Upper lobe of right lung (tissue), 1 donor: ENCODE measurements at regions of chr6 and their contacts with region 1.

Region 1: DNA sequence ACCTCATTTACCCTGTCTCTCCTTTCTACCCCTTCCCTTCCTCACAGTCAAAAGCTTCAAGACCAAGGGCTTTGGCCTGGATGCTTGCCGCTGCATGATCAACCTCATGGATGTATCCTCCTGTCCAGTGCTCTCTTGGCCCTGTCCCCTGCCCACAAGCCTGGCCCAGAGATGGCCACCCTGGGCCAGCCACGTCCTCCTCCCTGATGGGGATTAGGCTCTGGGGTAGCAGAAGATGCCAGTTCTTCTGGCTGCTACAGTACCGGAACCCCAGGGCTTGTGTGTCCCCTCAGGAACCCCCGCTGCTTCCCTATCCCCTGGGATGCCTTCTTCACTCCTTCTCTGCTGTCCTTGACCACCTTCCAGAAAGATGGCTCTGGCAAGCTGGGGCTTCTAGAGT is 22.3 kb downstream of the CAPN11 start:
- DNase-seq: no peak
- ATAC-seq: no peak
- H3K4me3 ChIP-seq: no peak overlapping the region
- H3K27ac ChIP-seq: no peak overlapping the region
- H3K4me1 ChIP-seq: peaks cover 4% of the 10 kb centered on the region
- H3K27me3 ChIP-seq: no peaks in the 10 kb centered on the region
- CTCF ChIP-seq: no peak

Region 2: GRCh38 chr6:44237813-44238433 is 57.0 kb after region 1 on chr6:
- intact Hi-C with region 1: loop called (anchors 5 kb)
- DNase-seq: peak; percentile 92
- ATAC-seq: peak; percentile 92
- H3K4me3 ChIP-seq: peak overlapping the region; percentile 63
- H3K27ac ChIP-seq: peak overlapping the region; percentile 90
- H3K4me1 ChIP-seq: peaks cover 30% of the 10 kb centered on the region
- H3K27me3 ChIP-seq: no peaks in the 10 kb centered on the region
- CTCF ChIP-seq: peak; percentile 97

Region 3: DNA sequence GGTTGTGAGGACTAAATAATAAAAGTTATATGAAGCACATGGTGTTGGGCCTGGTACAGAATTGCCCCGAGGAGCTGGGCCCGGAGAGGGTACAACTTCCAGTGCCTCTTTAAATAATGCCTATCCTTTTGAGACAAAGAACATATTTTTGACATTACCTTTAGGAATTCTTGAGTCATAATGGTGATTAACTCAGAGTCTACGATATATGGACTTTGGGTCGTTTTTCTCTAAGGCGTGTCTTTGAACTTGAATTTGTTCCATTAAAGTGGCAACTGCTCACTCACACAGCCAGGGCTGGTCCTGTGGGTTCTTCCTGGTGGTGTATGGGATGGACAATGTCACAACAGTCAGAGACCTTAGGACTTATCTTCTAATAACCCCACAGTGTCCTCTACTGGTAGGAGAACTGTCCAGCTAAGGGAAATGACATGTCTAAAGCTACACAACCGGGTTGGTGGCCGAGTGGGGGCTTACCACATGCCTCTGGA is 313.2 kb after region 1 on chr6:
- intact Hi-C with region 1: no loop called
- DNase-seq: no peak
- ATAC-seq: no peak
- H3K4me3 ChIP-seq: no peak overlapping the region
- H3K27ac ChIP-seq: no peak overlapping the region
- H3K4me1 ChIP-seq: no peaks in the 10 kb centered on the region
- H3K27me3 ChIP-seq: no peaks in the 10 kb centered on the region
- CTCF ChIP-seq: no peak